ENCODE measurements at regions of chr7 and their contacts with region 1.

Region 1: GRCh38 chr7:35906191-35906908 is 105.5 kb downstream of the SEPTIN7 start:
- DNase-seq: peak; percentile 68
- ATAC-seq: peak; percentile 97
- H3K4me3 ChIP-seq: no peak overlapping the region
- H3K27ac ChIP-seq: no peak overlapping the region
- H3K4me1 ChIP-seq: no peaks in the 10 kb centered on the region
- H3K27me3 ChIP-seq: no peaks in the 10 kb centered on the region
- CTCF ChIP-seq: peak; percentile 79 to 82 (median 80)
- EP300 ChIP-seq: no peak
- POLR2A ChIP-seq: 0 out of 2 replicates have a peak, but pooled peaks have one; percentile 35
- RAD21 ChIP-seq: peak; percentile 91

Region 2: DNA sequence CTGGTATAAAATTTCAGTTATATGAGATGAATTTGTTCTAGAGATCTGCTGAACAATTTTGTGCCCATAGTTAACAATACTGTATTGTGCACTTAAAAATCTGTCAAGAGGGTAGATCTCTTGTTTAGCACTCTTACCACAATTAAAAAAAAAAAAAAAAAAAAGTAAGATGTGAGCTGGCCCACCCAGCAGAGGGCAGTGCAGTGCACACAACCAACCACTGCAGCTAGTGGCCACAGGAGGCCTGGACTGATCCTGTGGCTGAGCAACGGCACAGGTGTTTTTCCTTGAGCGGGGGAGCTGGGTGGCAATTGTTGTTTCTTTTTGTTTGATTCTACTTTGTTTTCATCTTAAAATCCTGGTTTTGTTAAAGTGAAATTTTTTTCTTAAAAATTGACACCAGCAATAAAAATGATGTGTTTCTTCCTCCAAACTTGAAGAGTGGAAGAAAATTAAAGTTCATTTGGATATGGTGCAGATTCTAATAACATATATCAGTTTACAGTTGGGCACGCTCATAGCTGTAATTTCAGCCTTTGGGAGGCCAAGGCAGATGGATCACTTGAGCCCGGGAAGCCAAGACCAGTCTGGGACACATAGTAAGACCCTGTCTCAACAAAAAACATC is 481.4 kb before region 1 on chr7:
- CTCF ChIA-PET with region 1: interaction called, 5 read pairs
- POLR2A ChIA-PET with region 1: no interaction called
- RAD21 ChIA-PET with region 1: no interaction called
- SMC1A ChIA-PET with region 1: no interaction called
- in situ Hi-C with region 1: loop called (anchors 10 kb)
- intact Hi-C with region 1: no loop called
- DNase-seq: no peak
- ATAC-seq: peak; percentile 91
- H3K4me3 ChIP-seq: no peak overlapping the region
- H3K27ac ChIP-seq: no peak overlapping the region
- H3K4me1 ChIP-seq: no peaks in the 10 kb centered on the region
- H3K27me3 ChIP-seq: no peaks in the 10 kb centered on the region; a peak in 1 of 4 replicates
- CTCF ChIP-seq: peak; percentile 60 to 81 (median 77)
- EP300 ChIP-seq: no peak
- POLR2A ChIP-seq: no peak
- RAD21 ChIP-seq: peak; percentile 66

Region 3: DNA sequence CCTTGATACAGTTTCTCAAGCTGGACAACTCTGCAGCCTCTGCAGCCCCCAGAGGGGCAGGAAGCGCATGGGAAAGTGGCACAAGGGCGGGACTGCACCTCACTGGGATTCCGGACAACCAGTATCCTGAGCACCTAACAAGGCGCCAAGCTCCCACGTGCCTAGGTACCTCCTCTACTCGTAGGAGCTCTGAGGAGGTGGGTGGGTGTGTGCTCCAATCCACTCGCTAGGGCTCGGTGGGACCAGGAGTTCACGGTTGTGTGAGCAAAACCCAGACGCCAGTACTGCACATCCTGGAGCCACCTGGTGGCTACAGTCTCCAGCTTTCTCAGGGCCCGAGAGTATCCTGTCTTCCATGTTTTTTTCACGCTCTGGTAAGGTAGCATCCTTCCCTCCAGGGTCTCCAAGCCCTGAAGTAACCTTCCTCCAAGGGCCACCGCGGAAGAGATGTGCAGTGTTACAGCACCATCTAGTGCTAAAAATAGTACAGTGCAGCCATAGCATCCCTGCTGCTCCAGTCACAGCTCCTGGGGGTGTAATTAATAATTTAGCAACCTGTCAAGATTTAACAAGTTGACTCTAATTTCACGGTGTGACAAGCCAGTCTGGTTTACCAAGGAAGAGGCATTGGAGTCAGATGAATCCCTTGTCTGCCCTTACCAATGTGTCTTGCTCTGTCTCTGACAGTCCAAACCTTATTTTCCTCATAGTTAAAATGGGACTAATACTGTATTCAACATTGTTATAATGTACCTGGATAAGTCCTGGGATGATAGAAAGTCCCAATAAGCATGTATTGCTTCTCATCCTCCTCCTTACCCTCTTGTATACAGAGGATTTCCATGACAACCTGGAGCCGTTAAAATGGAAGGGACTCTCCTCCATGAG is 281.8 kb before region 1 on chr7:
- CTCF ChIA-PET with region 1: interaction called, 15 read pairs
- POLR2A ChIA-PET with region 1: no interaction called
- RAD21 ChIA-PET with region 1: interaction called, 7 read pairs
- SMC1A ChIA-PET with region 1: interaction called, 5 read pairs
- in situ Hi-C with region 1: no loop called
- intact Hi-C with region 1: loop called (anchors 2 kb)
- DNase-seq: no peak
- ATAC-seq: peak; percentile 95
- H3K4me3 ChIP-seq: no peak overlapping the region
- H3K27ac ChIP-seq: no peak overlapping the region
- H3K4me1 ChIP-seq: no peaks in the 10 kb centered on the region
- H3K27me3 ChIP-seq: no peaks in the 10 kb centered on the region
- CTCF ChIP-seq: peak; percentile 80 to 88 (median 85)
- EP300 ChIP-seq: no peak
- POLR2A ChIP-seq: no peak
- RAD21 ChIP-seq: peak; percentile 89

Region 4: GRCh38 chr7:35707422-35707821 is 198.9 kb before region 1 on chr7:
- CTCF ChIA-PET with region 1: interaction called, 115 read pairs
- POLR2A ChIA-PET with region 1: interaction called, 4 read pairs
- RAD21 ChIA-PET with region 1: interaction called, 26 read pairs
- SMC1A ChIA-PET with region 1: interaction called, 155 read pairs
- in situ Hi-C with region 1: loop called (anchors 5 kb)
- intact Hi-C with region 1: loop called (anchors 1 kb)
- DNase-seq: no peak
- ATAC-seq: no peak
- H3K4me3 ChIP-seq: no peak overlapping the region
- H3K27ac ChIP-seq: no peak overlapping the region
- H3K4me1 ChIP-seq: peaks cover 5% of the 10 kb centered on the region; the same call in 1 of the 2 replicates
- H3K27me3 ChIP-seq: no peaks in the 10 kb centered on the region
- CTCF ChIP-seq: no peak
- EP300 ChIP-seq: no peak
- POLR2A ChIP-seq: no peak
- RAD21 ChIP-seq: no peak

Region 5: DNA sequence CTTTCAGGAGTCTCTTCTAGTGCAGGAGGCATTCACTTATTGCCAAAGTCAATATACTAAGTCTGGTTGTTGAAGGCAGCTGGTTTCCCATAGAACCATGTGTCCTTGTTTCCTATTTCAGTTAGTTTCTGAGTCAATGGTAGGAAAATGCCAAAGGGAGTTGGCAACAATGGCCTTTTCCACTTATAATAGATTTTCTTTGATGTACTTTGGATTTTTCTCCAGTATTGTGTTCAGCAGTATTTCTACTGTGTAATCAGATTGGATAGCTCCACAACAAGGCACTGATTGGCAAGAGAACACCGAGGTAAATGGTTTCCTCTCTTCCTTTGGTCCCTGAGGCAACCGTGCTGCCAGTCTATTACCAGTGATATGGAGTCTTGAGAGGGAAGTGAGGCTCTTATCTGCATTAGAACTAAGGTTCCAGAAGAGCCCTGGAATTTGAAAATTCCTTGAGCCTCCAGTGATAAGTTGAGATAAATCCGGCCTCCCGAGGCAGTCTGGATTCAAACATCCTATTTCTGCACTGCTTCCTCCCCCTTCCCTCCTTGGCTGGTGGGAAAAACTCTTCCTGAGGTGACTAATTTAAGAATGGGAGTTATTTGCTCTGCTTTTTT is 113.4 kb before region 1 on chr7:
- CTCF ChIA-PET with region 1: no interaction called
- POLR2A ChIA-PET with region 1: no interaction called
- RAD21 ChIA-PET with region 1: no interaction called
- SMC1A ChIA-PET with region 1: no interaction called
- in situ Hi-C with region 1: no loop called
- intact Hi-C with region 1: no loop called
- DNase-seq: no peak
- ATAC-seq: no peak
- H3K4me3 ChIP-seq: no peak overlapping the region
- H3K27ac ChIP-seq: no peak overlapping the region
- H3K4me1 ChIP-seq: no peaks in the 10 kb centered on the region
- H3K27me3 ChIP-seq: no peaks in the 10 kb centered on the region
- CTCF ChIP-seq: no peak
- EP300 ChIP-seq: no peak
- POLR2A ChIP-seq: no peak
- RAD21 ChIP-seq: no peak

Region 6: DNA sequence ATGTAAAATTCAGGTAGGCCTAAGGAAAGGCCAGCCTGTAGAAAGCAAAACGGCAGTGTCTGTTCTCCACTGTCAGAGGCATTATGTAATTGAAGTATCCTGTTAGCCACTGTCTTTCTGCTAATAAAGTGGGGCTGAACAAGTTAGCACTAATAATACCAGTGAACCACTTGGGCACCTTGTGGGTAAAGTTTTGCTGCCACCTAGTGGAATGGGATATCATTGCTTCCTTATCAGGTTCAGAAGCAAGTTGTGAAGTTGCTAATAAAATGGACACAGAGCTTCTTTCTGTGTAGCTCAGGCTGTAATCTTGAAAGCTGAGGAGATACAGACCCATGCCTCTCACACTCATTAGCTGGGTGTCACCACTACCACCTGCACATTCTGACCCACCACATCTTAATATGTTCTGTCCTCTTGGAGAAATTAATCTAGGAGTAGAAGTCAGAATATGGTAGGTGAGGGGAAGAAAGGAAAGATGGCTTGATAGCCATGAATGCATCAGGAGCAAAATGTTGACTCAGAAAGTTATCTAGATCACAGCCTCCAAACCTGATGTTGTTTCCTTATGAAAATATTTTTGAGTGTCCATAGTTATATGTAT is 69.6 kb after region 1 on chr7:
- CTCF ChIA-PET with region 1: interaction called, 5 read pairs
- POLR2A ChIA-PET with region 1: no interaction called
- RAD21 ChIA-PET with region 1: interaction called, 3 read pairs
- SMC1A ChIA-PET with region 1: interaction called, 5 read pairs
- in situ Hi-C with region 1: loop called (anchors 5 kb)
- intact Hi-C with region 1: no loop called
- DNase-seq: peak; percentile 25
- ATAC-seq: peak; percentile 94
- H3K4me3 ChIP-seq: no peak overlapping the region
- H3K27ac ChIP-seq: no peak overlapping the region
- H3K4me1 ChIP-seq: no peaks in the 10 kb centered on the region
- H3K27me3 ChIP-seq: peaks cover 0 to 2% of the 10 kb centered on the region in 2 experiments; a peak in 2 of 4 replicates
- CTCF ChIP-seq: peak; percentile 72 to 83 (median 78)
- EP300 ChIP-seq: no peak
- POLR2A ChIP-seq: no peak
- RAD21 ChIP-seq: peak; percentile 91

Region 7: DNA sequence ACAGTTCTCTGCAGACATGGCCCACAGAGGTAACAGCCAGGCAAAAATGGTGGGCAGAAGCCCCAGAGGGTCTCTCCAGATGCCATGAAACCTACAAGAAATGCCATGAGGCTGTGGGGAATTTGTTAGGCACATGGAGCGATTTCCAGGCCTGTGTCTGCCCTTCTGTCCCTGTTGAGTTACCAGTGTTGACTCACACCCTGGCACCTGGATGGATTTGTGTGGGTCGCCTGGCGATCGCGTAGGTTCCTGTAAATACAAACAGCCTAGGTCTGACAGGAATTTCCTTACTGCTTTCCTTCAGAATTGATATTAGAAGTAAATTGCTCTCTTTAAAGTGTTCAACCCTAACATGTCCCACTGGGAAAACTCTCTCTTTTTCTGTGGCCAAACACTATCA is 81.8 kb after region 1 on chr7:
- CTCF ChIA-PET with region 1: no interaction called
- POLR2A ChIA-PET with region 1: no interaction called
- RAD21 ChIA-PET with region 1: no interaction called
- SMC1A ChIA-PET with region 1: no interaction called
- in situ Hi-C with region 1: no loop called
- intact Hi-C with region 1: no loop called
- DNase-seq: no peak
- ATAC-seq: no peak
- H3K4me3 ChIP-seq: no peak overlapping the region
- H3K27ac ChIP-seq: no peak overlapping the region
- H3K4me1 ChIP-seq: no peaks in the 10 kb centered on the region
- H3K27me3 ChIP-seq: peaks cover 0 to 3% of the 10 kb centered on the region in 2 experiments; a peak in 1 of 4 replicates
- CTCF ChIP-seq: no peak
- EP300 ChIP-seq: no peak
- POLR2A ChIP-seq: no peak
- RAD21 ChIP-seq: no peak

Measured in GM12878 (cell line).